ENCODE measurements at regions of chrX and their contacts with region 1.

Region 1: DNA sequence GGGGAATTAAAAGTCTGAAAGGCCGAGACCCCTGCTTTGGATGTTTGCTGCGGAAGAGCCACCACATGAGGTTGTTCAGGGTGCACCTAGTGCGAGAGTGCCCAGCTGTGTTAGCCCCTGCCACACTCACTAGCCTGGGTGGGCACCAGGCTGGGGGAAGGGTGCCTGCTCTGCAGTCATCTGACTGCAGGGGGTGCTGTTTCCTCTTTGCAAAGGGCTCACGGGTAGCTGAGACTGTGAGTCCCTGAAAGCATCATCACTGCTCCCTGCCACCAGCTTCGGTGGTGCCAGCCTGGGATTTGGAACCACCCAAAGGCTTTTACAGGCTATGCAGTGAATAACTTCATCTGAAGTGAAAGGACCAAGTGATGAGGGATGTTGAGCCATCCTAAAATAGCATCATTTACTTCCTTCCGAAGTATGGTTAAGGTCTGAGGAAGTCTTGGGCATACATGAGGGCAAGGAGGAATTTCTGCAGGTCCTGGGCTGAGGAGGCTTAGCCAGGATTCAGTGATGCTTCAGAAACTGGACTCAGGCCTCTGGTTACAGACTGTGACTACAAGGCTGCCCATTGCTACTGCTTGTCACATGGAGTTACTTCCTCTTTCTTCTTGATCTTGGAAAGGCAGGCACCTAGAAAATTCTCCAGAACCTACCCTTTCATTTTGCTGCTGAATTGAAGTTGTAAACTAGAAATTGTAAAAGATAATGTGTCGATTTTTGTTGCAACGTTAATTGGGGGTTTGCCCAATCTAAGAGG is 293.2 kb upstream of the PRPS2 start:
- DNase-seq: peak; percentile 21
- H3K4me3 Mint-ChIP-seq: no peak overlapping the region
- H3K27ac Mint-ChIP-seq: no peak overlapping the region
- H3K4me1 Mint-ChIP-seq: no peaks in the 10 kb centered on the region
- H3K27me3 Mint-ChIP-seq: peaks cover 38% of the 10 kb centered on the region
- CTCF ChIP-seq: peak; percentile 16

Region 2: DNA sequence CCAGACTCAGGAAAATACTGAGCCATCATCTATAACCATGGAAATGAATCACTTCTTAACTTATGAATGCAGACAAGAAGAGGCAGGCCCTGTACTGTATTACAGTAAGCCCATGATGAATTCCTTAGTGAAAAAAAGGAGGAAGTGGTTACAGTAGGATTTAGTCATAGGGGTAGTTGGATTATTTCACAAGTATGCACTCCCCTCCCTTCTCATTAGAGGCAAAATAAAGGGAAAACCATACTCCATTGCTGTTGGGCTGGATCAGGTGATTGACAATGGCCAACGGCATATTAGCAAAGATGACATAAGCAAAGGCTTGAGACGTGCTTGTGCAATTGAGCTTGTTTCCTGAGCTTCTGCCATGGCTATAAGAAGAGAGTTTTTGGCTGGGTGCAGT is 112.1 kb after region 1 on chrX:
- CTCF ChIA-PET with region 1: no interaction called
- intact Hi-C with region 1: no loop called
- DNase-seq: peak; percentile 2
- H3K4me3 Mint-ChIP-seq: no peak overlapping the region
- H3K27ac Mint-ChIP-seq: peak overlapping the region; percentile 74
- H3K4me1 Mint-ChIP-seq: peaks cover 14% of the 10 kb centered on the region
- H3K27me3 Mint-ChIP-seq: no peaks in the 10 kb centered on the region
- CTCF ChIP-seq: no peak

Region 3: DNA sequence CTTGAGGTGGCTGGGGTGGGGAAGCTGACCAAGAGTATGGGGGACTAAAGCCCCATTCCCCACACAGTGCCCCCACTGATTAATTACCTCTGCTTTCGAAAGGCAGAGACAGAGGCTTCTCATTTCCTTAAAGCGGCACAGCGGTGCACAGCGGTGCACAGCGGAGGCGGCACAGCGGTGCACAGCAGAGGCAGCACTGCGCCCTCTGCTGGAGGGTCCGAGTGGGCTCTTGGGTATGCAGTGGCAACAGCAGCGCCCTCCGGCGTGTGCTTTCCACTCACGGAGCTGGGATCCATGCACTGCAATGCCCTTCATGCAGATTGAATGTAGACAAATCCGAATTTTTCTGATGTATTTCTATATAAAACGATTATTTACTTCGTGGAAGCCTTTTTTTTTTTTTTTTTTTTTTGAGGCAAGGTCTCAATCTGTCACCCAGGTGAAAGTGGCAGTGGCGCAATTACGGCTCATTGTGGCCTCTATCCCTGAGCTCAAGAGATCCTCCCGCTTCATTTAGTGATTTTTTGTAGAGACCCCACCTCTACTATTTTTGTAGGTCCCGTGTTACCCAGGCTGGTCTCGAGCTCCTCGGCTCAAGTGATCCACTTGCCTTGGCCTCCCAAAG is 273.5 kb after region 1 on chrX:
- CTCF ChIA-PET with region 1: no interaction called
- intact Hi-C with region 1: loop called (anchors 10 kb)
- DNase-seq: peak; percentile 79
- H3K4me3 Mint-ChIP-seq: peak overlapping the region; percentile 31
- H3K27ac Mint-ChIP-seq: no peak overlapping the region
- H3K4me1 Mint-ChIP-seq: no peaks in the 10 kb centered on the region
- H3K27me3 Mint-ChIP-seq: peaks cover 12% of the 10 kb centered on the region
- CTCF ChIP-seq: peak; percentile 88

Measured in Calu3 (cell line).